ENCODE measurements at regions of chr10 and their contacts with region 1.

Region 1: DNA sequence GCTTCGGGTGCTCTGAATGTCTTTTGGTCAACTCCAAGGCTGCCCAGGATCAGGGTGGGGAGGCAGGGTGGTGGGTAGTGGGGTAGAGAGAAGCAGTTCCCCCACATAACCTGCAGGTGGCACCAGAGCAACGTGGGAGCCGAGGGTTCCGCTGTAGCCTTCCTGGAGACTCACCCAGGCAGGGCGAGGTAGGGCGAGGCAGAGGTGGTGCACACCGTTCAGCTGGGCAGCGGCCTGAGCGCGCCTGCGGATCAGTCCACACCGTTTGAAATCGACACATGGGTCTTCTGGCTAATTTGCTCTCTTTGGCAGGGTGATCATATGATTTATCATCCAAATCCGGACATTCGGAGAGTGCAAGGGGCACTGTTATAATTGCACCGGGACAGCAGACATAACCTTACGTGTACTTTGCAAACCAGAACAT is 41.4 kb upstream of the MAP3K8 start:
- DNase-seq: peak; percentile 53 to 85 (median 76)
- ATAC-seq: peak; percentile 100
- H3K4me3 ChIP-seq: no peak overlapping the region
- H3K4me3 Mint-ChIP-seq: no peak overlapping the region
- H3K27ac ChIP-seq: no peak overlapping the region
- H3K27ac Mint-ChIP-seq: no peak overlapping the region
- H3K4me1 ChIP-seq: peaks cover 7% of the 10 kb centered on the region
- H3K4me1 Mint-ChIP-seq: peaks cover 3% of the 10 kb centered on the region
- H3K27me3 ChIP-seq: peaks cover 0 to 3% of the 10 kb centered on the region in 2 experiments
- H3K27me3 Mint-ChIP-seq: peaks cover 12% of the 10 kb centered on the region
- CTCF ChIP-seq: peak; percentile 88

Region 2: GRCh38 chr10:30034433-30035137 is 358.0 kb before region 1 on chr10:
- CTCF ChIA-PET with region 1: no interaction called
- POLR2A ChIA-PET with region 1: no interaction called
- intact Hi-C with region 1: no loop called
- DNase-seq: no peak
- ATAC-seq: no peak
- H3K4me3 ChIP-seq: no peak overlapping the region
- H3K4me3 Mint-ChIP-seq: no peak overlapping the region
- H3K27ac ChIP-seq: no peak overlapping the region
- H3K27ac Mint-ChIP-seq: no peak overlapping the region
- H3K4me1 ChIP-seq: no peaks in the 10 kb centered on the region
- H3K4me1 Mint-ChIP-seq: peaks cover 1% of the 10 kb centered on the region
- H3K27me3 ChIP-seq: peaks cover 20 to 25% of the 10 kb centered on the region in 2 experiments
- H3K27me3 Mint-ChIP-seq: peaks cover 80% of the 10 kb centered on the region
- CTCF ChIP-seq: no peak

Region 3: GRCh38 chr10:30378201-30379006 is 14.2 kb before region 1 on chr10:
- CTCF ChIA-PET with region 1: interaction called, 10 read pairs
- POLR2A ChIA-PET with region 1: interaction called, 5 read pairs
- intact Hi-C with region 1: no loop called
- DNase-seq: no peak
- ATAC-seq: no peak
- H3K4me3 ChIP-seq: no peak overlapping the region
- H3K4me3 Mint-ChIP-seq: no peak overlapping the region
- H3K27ac ChIP-seq: no peak overlapping the region
- H3K27ac Mint-ChIP-seq: no peak overlapping the region
- H3K4me1 ChIP-seq: peaks cover 9% of the 10 kb centered on the region
- H3K4me1 Mint-ChIP-seq: no peaks in the 10 kb centered on the region
- H3K27me3 ChIP-seq: no peaks in the 10 kb centered on the region
- H3K27me3 Mint-ChIP-seq: peaks cover 3% of the 10 kb centered on the region
- CTCF ChIP-seq: no peak

Region 4: DNA sequence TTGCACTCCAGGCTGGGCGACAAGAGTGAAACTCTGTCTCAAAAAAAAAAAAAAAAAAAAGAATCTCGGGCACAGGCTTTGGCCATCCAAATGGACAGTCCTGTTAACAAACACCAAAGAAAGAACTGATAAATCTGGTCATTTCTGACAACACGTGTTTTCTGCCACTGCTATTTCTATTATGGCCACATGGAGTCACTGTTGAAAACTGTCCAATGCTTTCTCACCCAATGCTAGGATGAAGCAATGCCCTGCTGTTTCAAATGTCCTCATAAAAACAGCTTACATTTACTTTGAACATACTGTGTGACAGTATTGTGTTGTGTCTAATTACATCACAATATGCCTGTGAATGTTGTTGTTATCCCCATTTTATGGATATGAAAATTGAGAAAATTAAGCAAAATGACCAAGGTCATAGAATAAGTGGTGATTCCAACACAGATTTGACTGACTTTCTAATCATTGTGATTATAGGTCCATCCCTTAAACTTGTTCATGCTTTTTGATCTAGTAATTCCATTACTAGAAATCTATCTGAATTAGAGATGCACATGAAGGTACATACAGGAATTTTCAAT is 21.5 kb after region 1 on chr10:
- CTCF ChIA-PET with region 1: interaction called, 10 read pairs
- POLR2A ChIA-PET with region 1: no interaction called
- intact Hi-C with region 1: loop called in 1 of 2 experiments (anchors 1 kb)
- DNase-seq: peak in 2 of 9 experiments; percentile 66 to 78
- ATAC-seq: peak; percentile 73
- H3K4me3 ChIP-seq: no peak overlapping the region
- H3K4me3 Mint-ChIP-seq: no peak overlapping the region
- H3K27ac ChIP-seq: no peak overlapping the region
- H3K27ac Mint-ChIP-seq: no peak overlapping the region
- H3K4me1 ChIP-seq: peaks cover 10% of the 10 kb centered on the region
- H3K4me1 Mint-ChIP-seq: peaks cover 9% of the 10 kb centered on the region
- H3K27me3 ChIP-seq: no peaks in the 10 kb centered on the region
- H3K27me3 Mint-ChIP-seq: no peaks in the 10 kb centered on the region
- CTCF ChIP-seq: peak; percentile 66

Region 5: GRCh38 chr10:30553625-30554439 is 161.3 kb after region 1 on chr10:
- CTCF ChIA-PET with region 1: interaction called, 11 read pairs
- POLR2A ChIA-PET with region 1: no interaction called
- intact Hi-C with region 1: no loop called
- DNase-seq: no peak
- ATAC-seq: no peak
- H3K4me3 ChIP-seq: no peak overlapping the region
- H3K4me3 Mint-ChIP-seq: no peak overlapping the region
- H3K27ac ChIP-seq: no peak overlapping the region
- H3K27ac Mint-ChIP-seq: no peak overlapping the region
- H3K4me1 ChIP-seq: no peaks in the 10 kb centered on the region
- H3K4me1 Mint-ChIP-seq: peaks cover 3% of the 10 kb centered on the region
- H3K27me3 ChIP-seq: no peaks in the 10 kb centered on the region
- H3K27me3 Mint-ChIP-seq: no peaks in the 10 kb centered on the region
- CTCF ChIP-seq: no peak

Region 6: DNA sequence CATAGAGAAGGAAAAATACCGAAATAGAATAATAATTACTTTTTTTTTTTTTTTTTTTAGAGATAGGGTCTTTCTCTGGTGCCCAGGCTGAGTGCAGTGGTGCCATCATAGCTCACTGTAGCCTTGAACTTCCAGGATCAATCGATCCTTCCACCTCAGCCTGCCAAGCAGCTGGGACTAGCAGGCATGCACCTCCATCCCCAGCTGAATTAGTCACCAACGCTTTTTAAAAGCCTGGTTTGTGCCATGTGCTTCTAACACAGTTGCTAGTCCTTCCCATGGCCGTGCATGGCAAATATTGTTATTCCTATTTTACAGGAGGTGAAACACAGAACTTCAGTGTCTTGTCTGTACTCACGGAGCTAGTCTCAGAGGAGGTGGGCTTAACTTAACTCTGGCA is 213.7 kb after region 1 on chr10:
- CTCF ChIA-PET with region 1: interaction called, 11 read pairs
- POLR2A ChIA-PET with region 1: no interaction called
- intact Hi-C with region 1: no loop called
- DNase-seq: no peak
- ATAC-seq: no peak
- H3K4me3 ChIP-seq: no peak overlapping the region
- H3K4me3 Mint-ChIP-seq: no peak overlapping the region
- H3K27ac ChIP-seq: no peak overlapping the region
- H3K27ac Mint-ChIP-seq: no peak overlapping the region
- H3K4me1 ChIP-seq: no peaks in the 10 kb centered on the region
- H3K4me1 Mint-ChIP-seq: no peaks in the 10 kb centered on the region
- H3K27me3 ChIP-seq: no peaks in the 10 kb centered on the region
- H3K27me3 Mint-ChIP-seq: peaks cover 25% of the 10 kb centered on the region
- CTCF ChIP-seq: no peak